ENCODE measurements at regions of chr15 and their contacts with region 1.

Region 1: DNA sequence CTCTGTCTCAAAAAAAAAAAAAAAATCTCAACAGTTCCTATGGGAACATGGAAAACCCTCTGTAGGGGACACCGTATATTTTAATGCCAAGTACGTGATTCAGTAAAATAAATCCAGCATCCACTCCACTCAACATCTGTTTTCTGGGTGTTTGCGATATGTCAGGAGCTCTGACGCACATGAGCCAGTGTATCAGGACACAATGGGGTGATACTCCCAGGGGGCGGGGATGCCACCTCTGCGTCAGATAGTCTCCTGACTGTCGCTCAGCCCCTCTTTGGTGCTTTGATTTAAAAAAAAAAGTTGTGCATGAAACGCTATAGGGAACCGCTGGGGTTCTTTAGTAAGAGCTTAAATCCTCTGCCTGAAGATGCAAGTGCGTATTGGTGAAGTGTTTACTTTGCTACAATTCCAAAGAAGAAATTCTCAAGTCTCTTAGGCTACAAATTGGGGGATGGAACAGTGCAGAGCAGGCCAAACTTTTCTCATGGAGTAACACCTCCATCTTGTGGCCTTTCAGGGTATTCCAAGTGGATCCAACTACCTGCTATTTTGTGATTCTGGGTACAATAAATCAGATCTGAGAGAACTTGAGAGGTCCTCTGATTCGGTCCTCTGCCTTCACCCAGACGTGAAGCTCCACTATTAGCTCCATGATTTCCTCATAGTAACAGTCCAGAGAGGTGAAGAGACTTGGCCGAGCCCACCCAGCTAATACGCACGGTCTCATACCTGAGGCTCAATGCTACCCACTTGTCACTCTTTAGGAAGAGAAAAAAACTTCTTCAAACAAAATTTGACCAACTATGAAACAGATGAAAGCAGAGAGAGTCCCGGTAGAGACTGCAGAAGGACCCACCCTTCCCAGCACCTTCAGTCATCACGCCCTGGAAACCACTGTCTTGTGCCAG is 9.3 kb upstream of the NR2E3 start:
- DNase-seq: peak; percentile 56
- ATAC-seq: peak; percentile 88
- H3K4me3 ChIP-seq: no peak overlapping the region
- H3K27ac ChIP-seq: no peak overlapping the region
- H3K4me1 ChIP-seq: no peaks in the 10 kb centered on the region; a peak in 1 of 4 replicates
- H3K27me3 ChIP-seq: no peaks in the 10 kb centered on the region
- CTCF ChIP-seq: peak; percentile 74 to 91 (median 82); a peak in 5 of 6 replicates
- POLR2A ChIP-seq: no peak
- RAD21 ChIP-seq: peak; percentile 94

Region 2: DNA sequence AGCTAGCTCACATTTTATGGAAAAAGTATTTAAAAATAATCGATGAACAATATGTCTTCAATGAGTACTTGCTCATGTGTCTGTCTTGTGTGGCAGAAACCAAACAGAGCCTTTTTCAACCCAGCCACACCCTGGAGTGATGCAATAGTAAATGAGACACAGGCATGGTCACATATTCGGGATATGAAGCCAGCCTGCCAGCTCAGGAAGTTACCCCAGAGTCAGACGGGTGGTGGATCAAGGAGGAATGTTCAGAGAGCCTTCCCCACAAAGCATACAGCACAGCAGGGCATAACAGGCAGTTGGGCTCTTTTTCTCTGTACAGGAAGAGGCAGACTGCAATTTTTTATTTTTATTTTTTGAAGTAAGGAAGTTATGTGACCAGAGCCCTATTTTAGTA is 974.5 kb before region 1 on chr15:
- CTCF ChIA-PET with region 1: no interaction called
- POLR2A ChIA-PET with region 1: no interaction called
- RAD21 ChIA-PET with region 1: no interaction called
- intact Hi-C with region 1: loop called (anchors 10 kb)
- DNase-seq: peak; percentile 29
- ATAC-seq: peak; percentile 20; the same call in 1 of the 2 replicates
- H3K4me3 ChIP-seq: no peak overlapping the region
- H3K27ac ChIP-seq: no peak overlapping the region
- H3K4me1 ChIP-seq: peaks cover 13 to 21% of the 10 kb centered on the region in 2 experiments
- H3K27me3 ChIP-seq: no peaks in the 10 kb centered on the region
- CTCF ChIP-seq: no peak
- POLR2A ChIP-seq: no peak
- RAD21 ChIP-seq: no peak

Region 3: GRCh38 chr15:71114896-71115554 is 686.1 kb before region 1 on chr15 and contains the start of gene THSD4:
- CTCF ChIA-PET with region 1: no interaction called
- POLR2A ChIA-PET with region 1: no interaction called
- RAD21 ChIA-PET with region 1: no interaction called
- intact Hi-C with region 1: loop called (anchors 5 kb)
- DNase-seq: no peak
- ATAC-seq: peak; percentile 79
- H3K4me3 ChIP-seq: peak within 1 kb of the TSS; percentile 71 to 72
- H3K27ac ChIP-seq: peak within 1 kb of the TSS; percentile 84
- H3K4me1 ChIP-seq: peaks cover 21 to 31% of the 10 kb centered on the region in 2 experiments
- H3K27me3 ChIP-seq: no peaks in the 10 kb centered on the region
- CTCF ChIP-seq: peak; percentile 64 to 98 (median 97)
- POLR2A ChIP-seq: no peak
- RAD21 ChIP-seq: peak; percentile 66
- total RNA-seq, gene THSD4: 30.5 TPM

Region 4: GRCh38 chr15:71448688-71449114 is 352.4 kb before region 1 on chr15:
- CTCF ChIA-PET with region 1: interaction called, 4 read pairs
- POLR2A ChIA-PET with region 1: no interaction called
- RAD21 ChIA-PET with region 1: no interaction called
- intact Hi-C with region 1: loop called (anchors 1 kb)
- DNase-seq: peak; percentile 56
- ATAC-seq: peak; percentile 26
- H3K4me3 ChIP-seq: no peak overlapping the region
- H3K27ac ChIP-seq: no peak overlapping the region; the same call in 1 of the 2 replicates
- H3K4me1 ChIP-seq: peaks cover 50 to 55% of the 10 kb centered on the region in 2 experiments
- H3K27me3 ChIP-seq: no peaks in the 10 kb centered on the region
- CTCF ChIP-seq: peak; percentile 79 to 94 (median 83)
- POLR2A ChIP-seq: no peak
- RAD21 ChIP-seq: peak; percentile 88

Region 5: DNA sequence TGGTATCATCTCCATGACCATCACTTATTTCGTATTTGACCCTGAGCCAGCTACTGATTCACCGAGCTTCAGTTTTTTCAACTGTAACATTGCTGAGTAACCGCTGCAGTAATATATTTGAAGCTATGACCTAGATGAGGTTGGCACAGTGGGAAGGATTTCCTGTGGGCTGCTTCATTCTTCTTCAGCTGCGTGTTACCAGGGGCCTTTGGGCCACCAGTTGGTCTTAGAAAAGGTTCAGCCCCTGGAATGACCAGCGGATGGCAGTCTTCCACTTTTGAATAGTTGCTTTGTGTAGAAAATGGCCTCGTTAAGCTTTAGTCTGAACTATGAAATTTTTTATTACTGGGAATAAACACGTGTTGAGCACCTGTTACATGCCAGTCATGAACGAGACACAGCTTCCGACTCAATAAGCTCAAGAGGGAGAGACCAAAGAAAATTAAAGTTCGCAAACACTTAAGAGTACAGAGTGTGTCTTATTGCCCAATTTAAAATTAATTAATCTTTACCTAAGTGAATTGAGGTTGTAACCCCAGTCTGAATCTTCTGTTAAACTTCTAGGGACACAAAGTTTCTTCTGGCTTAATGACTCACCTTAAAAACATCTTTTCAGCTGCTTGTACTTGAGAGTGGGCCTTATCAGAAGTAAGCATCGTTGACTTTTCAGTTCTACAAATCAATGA is 48.3 kb before region 1 on chr15:
- CTCF ChIA-PET with region 1: interaction called, 40 read pairs
- POLR2A ChIA-PET with region 1: interaction called, 9 read pairs
- RAD21 ChIA-PET with region 1: no interaction called
- intact Hi-C with region 1: loop called (anchors 1 kb)
- DNase-seq: peak; percentile 65
- ATAC-seq: peak; percentile 59
- H3K4me3 ChIP-seq: no peak overlapping the region
- H3K27ac ChIP-seq: no peak overlapping the region
- H3K4me1 ChIP-seq: peaks cover 25 to 38% of the 10 kb centered on the region in 2 experiments
- H3K27me3 ChIP-seq: no peaks in the 10 kb centered on the region
- CTCF ChIP-seq: peak; percentile 65 to 81 (median 68)
- POLR2A ChIP-seq: no peak
- RAD21 ChIP-seq: peak; percentile 76

Region 6: GRCh38 chr15:71826196-71826595 is 25.1 kb after region 1 on chr15:
- CTCF ChIA-PET with region 1: no interaction called
- POLR2A ChIA-PET with region 1: no interaction called
- RAD21 ChIA-PET with region 1: no interaction called
- intact Hi-C with region 1: no loop called
- DNase-seq: no peak
- ATAC-seq: no peak
- H3K4me3 ChIP-seq: no peak overlapping the region
- H3K27ac ChIP-seq: no peak overlapping the region
- H3K4me1 ChIP-seq: no peaks in the 10 kb centered on the region
- H3K27me3 ChIP-seq: no peaks in the 10 kb centered on the region
- CTCF ChIP-seq: no peak
- POLR2A ChIP-seq: no peak
- RAD21 ChIP-seq: no peak